ENCODE measurements at regions of chr6 and their contacts with region 1.

Region 1: DNA sequence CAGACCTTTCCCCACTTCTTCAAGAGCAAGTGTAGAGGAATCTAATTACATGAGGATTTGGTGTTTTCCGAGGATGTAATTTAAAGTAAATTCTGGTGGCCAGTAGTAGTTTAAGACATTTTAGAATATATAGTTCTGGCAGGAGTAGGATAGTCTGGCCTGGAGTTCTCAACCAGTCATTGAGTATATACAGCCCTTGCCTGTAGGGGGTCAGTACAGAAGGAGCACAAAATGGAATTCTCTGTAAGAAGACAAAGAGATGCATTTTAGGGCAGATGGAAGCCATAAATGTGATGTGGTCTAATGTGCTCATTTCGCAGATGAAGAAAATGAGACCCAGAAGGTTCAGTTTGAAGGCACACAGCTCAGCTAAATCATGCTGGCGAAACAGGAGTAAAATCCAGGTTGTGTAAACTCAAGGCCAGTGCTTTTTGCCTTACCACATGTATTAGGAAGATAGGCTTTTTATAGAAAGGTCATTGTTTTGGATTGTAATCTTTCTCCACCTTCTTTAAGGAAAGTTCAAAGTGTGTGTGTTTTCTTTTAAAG is 29.5 kb downstream of the QKI start:
- DNase-seq: no peak

Region 2: DNA sequence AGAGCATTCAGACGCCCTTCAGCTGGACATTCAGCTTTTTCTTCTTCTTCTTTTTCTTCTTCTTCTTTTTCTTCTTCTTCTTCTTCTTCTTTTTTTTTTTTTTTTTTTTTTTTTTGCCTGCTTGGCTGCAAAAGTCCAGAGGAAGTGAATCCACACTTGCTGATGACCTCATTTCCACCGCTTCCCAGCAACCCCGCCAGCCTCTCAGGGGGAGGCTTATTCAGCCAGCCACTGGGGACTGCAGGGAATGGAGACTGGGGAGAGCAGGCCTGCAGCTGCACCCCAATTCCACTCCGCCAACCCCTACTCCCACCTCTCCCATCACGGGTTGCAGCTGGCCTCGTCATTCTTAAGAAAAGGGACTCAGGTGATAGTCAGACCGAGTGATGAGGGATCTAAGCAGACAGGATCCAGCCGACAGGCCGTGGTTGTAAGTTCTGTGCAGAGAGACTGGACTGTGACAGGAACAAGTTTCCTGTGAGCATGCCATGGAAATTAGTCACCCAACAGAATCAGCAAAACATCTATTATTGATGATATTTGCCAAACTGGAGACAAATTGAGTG is 88.5 kb before region 1 on chr6:
- intact Hi-C with region 1: no loop called
- DNase-seq: peak; percentile 88

Region 3: GRCh38 chr6:163533443-163533842 is 89.4 kb after region 1 on chr6:
- intact Hi-C with region 1: loop called (anchors 10 kb)
- DNase-seq: no peak

Region 4: GRCh38 chr6:163572612-163573011 is 128.6 kb after region 1 on chr6:
- intact Hi-C with region 1: no loop called
- DNase-seq: no peak